ENCODE measurements at regions of chr15 and their contacts with region 1.

Region 1: GRCh38 chr15:89358755-89359439 is 24.3 kb upstream of the POLG start:
- DNase-seq: peak; percentile 91
- CTCF ChIP-seq: peak; percentile 97

Region 2: DNA sequence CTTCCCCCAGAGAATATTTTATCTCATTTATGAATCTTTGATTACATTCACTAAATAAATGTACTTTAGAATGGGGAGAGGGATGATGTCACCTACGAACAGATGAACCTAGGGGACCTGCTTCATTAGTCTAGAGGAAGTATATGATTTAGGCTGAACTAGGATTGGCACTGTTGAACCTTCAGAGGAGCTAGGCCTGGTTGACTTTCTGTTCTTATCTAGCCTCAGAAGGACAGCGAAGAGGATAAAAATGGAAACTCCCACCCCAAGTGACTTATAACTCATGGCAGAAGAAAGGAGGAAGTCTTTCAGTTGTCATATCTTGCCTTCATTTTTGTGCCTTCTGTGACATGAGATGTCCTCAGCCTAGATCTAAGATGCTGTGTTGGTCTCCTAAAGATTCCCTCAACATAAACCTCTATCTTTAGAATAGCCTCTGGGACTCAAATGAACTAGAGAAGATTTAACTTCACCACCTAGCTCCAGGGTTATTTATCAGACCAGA is 66.9 kb before region 1 on chr15:
- CTCF ChIA-PET with region 1: no interaction called
- POLR2A ChIA-PET with region 1: no interaction called
- DNase-seq: no peak
- CTCF ChIP-seq: no peak

Region 3: DNA sequence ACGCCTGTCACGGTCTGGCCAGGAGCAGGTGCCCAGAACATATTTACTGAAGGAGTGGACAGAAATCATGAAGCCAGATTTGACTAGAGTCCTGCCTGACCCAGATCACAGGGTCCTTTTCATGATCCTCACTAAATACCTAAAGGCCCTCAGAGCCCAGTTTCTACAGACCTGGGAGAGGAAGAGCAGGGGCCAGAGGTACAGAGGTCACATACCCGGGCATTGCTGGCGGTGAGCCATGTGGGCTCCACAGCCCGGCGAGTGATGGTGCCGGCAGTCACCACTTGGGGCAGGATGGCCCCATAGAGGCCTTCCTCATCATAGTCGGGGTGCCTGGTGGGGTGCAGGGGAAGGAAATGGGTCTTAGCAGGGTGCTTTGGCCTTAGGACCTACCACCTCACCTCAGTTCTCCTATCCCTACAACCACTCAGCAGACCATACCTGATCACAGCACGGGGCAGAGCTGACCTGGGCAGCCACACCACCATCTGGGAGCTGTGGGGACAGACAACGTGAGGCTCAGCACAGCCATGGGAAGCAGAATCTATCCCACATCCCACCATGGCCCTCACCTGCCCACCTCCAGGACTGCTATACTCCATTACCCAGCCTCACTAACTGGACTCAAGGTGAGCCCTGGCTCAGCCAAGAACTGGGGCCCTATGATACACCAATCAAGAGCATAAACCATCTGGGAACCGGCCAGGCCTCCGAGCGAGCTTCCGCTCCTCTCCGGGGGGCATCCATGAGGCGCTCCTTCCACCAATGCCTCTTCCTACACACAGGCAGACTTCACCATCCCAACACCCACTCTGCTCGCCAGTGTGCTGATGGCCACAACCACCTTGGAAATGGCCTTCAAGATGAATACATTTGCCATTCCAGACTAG is 37.1 kb before region 1 on chr15:
- CTCF ChIA-PET with region 1: interaction called, 12 read pairs
- POLR2A ChIA-PET with region 1: no interaction called
- DNase-seq: no peak
- CTCF ChIP-seq: no peak

Region 4: DNA sequence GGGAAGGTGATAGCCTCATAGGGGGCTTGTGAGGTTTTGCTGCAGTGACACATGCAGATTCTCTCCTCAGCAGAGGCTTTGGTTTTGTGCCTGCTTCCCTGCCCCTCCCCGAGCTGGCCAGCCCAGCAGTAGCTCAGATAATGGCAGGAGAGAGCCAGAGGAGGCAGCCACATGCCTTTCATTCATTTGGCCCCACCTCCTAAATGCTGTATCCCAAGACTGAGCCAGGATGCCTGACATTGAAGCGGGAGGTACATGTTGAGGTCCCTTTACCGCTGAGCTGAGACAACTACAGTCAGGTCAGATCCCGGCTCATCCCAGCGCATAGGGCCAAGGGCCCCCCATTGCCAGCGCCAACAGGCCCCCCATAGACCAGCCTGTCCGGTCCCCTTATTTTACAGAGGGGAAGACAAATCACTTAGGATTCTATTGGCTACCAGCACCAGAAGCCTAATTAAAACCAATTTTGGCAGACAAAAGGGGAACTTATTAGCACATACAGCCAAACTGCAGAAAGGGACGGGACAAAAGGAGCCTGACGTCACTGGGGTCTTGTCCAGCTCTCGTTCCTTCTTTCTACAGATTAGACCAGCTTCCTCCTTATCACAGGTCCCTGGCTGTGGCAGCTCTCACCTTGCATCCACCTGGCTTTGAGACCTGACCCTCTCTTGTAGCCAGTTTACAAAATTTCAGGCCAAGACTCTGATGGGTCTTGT is 12.2 kb before region 1 on chr15:
- CTCF ChIA-PET with region 1: interaction called, 83 read pairs
- POLR2A ChIA-PET with region 1: no interaction called
- DNase-seq: no peak
- CTCF ChIP-seq: no peak

Region 5: GRCh38 chr15:89399238-89400120 is 40.6 kb after region 1 on chr15:
- CTCF ChIA-PET with region 1: interaction called, 155 read pairs
- POLR2A ChIA-PET with region 1: no interaction called
- DNase-seq: peak; percentile 86
- CTCF ChIP-seq: peak; percentile 63

Region 6: GRCh38 chr15:89436570-89437316 is 77.8 kb after region 1 on chr15:
- CTCF ChIA-PET with region 1: interaction called, 156 read pairs
- POLR2A ChIA-PET with region 1: no interaction called
- DNase-seq: no peak
- CTCF ChIP-seq: no peak

Region 7: GRCh38 chr15:89472785-89473256 is 113.9 kb after region 1 on chr15:
- CTCF ChIA-PET with region 1: interaction called, 126 read pairs
- POLR2A ChIA-PET with region 1: no interaction called
- DNase-seq: peak; percentile 79
- CTCF ChIP-seq: peak; percentile 90

Measured in GM10248 (cell line).